ENCODE measurements at regions of chr1 and their contacts with region 1.

Region 1: GRCh38 chr1:183234660-183235476 is 48.8 kb downstream of the LAMC2 start:
- DNase-seq: peak in 1 of 2 donors; percentile 98
- H3K4me3 ChIP-seq: peak overlapping the region; percentile 8 to 27
- H3K27ac ChIP-seq: peak overlapping the region; percentile 87
- H3K4me1 ChIP-seq: peaks cover 22% of the 10 kb centered on the region
- H3K27me3 ChIP-seq: no peaks in the 10 kb centered on the region
- CTCF ChIP-seq: peak; percentile 28 to 66 (median 45)
- POLR2A ChIP-seq: no peak

Region 2: GRCh38 chr1:182962554-182963115 is 272.2 kb before region 1 on chr1:
- intact Hi-C with region 1: loop called (anchors 10 kb)
- DNase-seq: peak in 1 of 2 donors; percentile 90
- H3K4me3 ChIP-seq: peak overlapping the region in 1 of 2 donors; percentile 26
- H3K27ac ChIP-seq: peak overlapping the region; percentile 83
- H3K4me1 ChIP-seq: peaks cover 6% of the 10 kb centered on the region
- H3K27me3 ChIP-seq: no peaks in the 10 kb centered on the region
- CTCF ChIP-seq: peak; percentile 64 to 96 (median 80)
- POLR2A ChIP-seq: peak in 1 of 2 donors; percentile 37